ENCODE measurements at regions of chr4 and their contacts with region 1.

Region 1: GRCh38 chr4:38948551-38948950 is 80.9 kb downstream of the FAM114A1 start:
- DNase-seq: no peak
- ATAC-seq: no peak
- H3K4me3 Mint-ChIP-seq: no peak overlapping the region
- H3K27ac Mint-ChIP-seq: no peak overlapping the region
- H3K4me1 Mint-ChIP-seq: peaks cover 24% of the 10 kb centered on the region
- H3K27me3 Mint-ChIP-seq: peaks cover 11% of the 10 kb centered on the region

Region 2: DNA sequence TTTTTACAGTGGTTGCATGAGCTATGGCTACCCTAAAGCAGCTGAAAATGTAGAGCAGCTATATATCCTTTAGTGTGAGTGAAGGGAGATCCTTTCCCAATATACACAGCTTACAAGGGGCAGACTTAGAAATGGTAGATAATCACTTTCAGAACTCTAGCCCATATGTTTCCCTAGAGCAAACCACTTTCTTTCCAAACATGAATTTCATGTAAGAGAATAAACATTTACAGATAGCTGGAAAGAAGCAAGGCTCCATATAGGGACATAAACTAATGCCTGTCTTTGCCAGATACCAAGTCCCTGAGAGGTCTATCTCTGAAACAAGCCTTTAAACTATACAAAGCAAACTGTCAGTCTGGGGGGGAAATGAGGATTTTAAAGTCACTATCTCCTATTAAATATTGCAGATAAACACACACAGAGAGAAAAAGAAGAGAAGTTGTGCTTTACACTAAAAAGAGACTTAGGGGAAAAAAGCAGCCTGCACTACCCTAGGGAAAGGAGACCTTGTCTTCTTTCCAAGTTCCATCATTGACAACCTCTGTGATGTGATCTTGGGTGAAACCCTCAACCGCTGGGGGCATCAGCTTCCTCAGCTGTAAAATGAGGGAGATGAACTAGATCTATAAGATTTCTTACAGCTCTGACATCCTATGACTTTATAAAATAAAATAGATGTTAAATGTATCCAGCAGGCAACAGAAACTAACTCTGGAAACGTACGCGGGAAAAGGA is 10.1 kb after region 1 on chr4:
- CTCF ChIA-PET with region 1: interaction called, 10 read pairs
- POLR2A ChIA-PET with region 1: interaction called, 3 read pairs
- DNase-seq: no peak
- ATAC-seq: peak; percentile 30
- H3K4me3 Mint-ChIP-seq: no peak overlapping the region
- H3K27ac Mint-ChIP-seq: no peak overlapping the region
- H3K4me1 Mint-ChIP-seq: peaks cover 12% of the 10 kb centered on the region
- H3K27me3 Mint-ChIP-seq: peaks cover 3% of the 10 kb centered on the region